ENCODE measurements at regions of chr1 and their contacts with region 1.

Region 1: GRCh38 chr1:239413916-239414315 is 27.5 kb downstream of the CHRM3 start:
- DNase-seq: no peak
- ATAC-seq: no peak
- H3K4me3 ChIP-seq: no peak overlapping the region
- H3K4me3 Mint-ChIP-seq: no peak overlapping the region
- H3K27ac ChIP-seq: no peak overlapping the region
- H3K27ac Mint-ChIP-seq: no peak overlapping the region
- H3K4me1 ChIP-seq: no peaks in the 10 kb centered on the region
- H3K4me1 Mint-ChIP-seq: no peaks in the 10 kb centered on the region
- H3K27me3 ChIP-seq: no peaks in the 10 kb centered on the region
- H3K27me3 Mint-ChIP-seq: no peaks in the 10 kb centered on the region
- CTCF ChIP-seq: no peak

Region 2: GRCh38 chr1:239262538-239262937 is 151.4 kb before region 1 on chr1:
- CTCF ChIA-PET with region 1: no interaction called
- POLR2A ChIA-PET with region 1: no interaction called
- intact Hi-C with region 1: no loop called
- DNase-seq: no peak
- ATAC-seq: no peak
- H3K4me3 ChIP-seq: no peak overlapping the region
- H3K4me3 Mint-ChIP-seq: no peak overlapping the region
- H3K27ac ChIP-seq: no peak overlapping the region
- H3K27ac Mint-ChIP-seq: no peak overlapping the region
- H3K4me1 ChIP-seq: no peaks in the 10 kb centered on the region
- H3K4me1 Mint-ChIP-seq: no peaks in the 10 kb centered on the region
- H3K27me3 ChIP-seq: no peaks in the 10 kb centered on the region
- H3K27me3 Mint-ChIP-seq: no peaks in the 10 kb centered on the region
- CTCF ChIP-seq: no peak

Region 3: DNA sequence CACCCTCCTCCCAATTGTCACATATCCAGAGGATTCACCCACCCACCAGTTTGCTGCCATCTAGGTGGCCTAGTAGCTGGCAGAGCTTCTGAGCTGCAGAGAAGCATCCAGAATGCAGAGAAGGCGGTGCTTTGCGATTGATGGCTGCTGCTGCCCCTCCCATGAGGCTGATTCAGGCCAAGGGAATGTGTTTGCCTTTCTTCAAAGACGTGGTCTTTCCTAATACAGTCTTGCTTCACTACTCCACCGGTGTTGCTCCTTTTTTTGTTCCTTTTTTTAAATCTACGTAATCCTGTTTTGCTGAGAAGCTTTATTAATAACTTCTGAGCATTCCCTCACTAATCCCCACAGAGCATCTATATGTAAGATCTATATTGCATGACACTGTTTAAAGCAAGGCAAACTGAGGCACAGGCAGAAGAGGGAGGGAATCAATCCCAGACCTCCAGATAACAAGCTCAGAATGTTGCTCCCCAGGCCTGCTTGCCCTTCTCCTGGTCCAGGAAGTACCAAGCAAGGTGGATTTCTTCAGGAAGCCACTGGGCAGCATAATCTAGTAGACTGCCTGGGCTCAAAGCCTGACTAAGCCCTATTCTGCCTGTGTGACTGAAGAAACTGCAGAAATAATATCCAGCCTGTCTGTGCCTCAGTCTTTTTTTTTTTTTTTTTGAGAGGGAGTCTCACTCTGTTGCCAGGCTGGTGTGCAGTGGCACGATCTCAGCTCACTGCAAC is 402.3 kb after region 1 on chr1:
- CTCF ChIA-PET with region 1: no interaction called
- POLR2A ChIA-PET with region 1: no interaction called
- intact Hi-C with region 1: loop called in 1 of 2 experiments (anchors 5 kb)
- DNase-seq: peak in 2 of 14 experiments; percentile 16 to 38
- ATAC-seq: no peak
- H3K4me3 ChIP-seq: no peak overlapping the region
- H3K4me3 Mint-ChIP-seq: no peak overlapping the region
- H3K27ac ChIP-seq: no peak overlapping the region
- H3K27ac Mint-ChIP-seq: no peak overlapping the region
- H3K4me1 ChIP-seq: peaks cover 10% of the 10 kb centered on the region
- H3K4me1 Mint-ChIP-seq: peaks cover 16% of the 10 kb centered on the region
- H3K27me3 ChIP-seq: no peaks in the 10 kb centered on the region
- H3K27me3 Mint-ChIP-seq: no peaks in the 10 kb centered on the region
- CTCF ChIP-seq: no peak

Measured in CD4-positive, alpha-beta T cell (primary cell).